ENCODE measurements at regions of chr19 and their contacts with region 1.

Region 1: DNA sequence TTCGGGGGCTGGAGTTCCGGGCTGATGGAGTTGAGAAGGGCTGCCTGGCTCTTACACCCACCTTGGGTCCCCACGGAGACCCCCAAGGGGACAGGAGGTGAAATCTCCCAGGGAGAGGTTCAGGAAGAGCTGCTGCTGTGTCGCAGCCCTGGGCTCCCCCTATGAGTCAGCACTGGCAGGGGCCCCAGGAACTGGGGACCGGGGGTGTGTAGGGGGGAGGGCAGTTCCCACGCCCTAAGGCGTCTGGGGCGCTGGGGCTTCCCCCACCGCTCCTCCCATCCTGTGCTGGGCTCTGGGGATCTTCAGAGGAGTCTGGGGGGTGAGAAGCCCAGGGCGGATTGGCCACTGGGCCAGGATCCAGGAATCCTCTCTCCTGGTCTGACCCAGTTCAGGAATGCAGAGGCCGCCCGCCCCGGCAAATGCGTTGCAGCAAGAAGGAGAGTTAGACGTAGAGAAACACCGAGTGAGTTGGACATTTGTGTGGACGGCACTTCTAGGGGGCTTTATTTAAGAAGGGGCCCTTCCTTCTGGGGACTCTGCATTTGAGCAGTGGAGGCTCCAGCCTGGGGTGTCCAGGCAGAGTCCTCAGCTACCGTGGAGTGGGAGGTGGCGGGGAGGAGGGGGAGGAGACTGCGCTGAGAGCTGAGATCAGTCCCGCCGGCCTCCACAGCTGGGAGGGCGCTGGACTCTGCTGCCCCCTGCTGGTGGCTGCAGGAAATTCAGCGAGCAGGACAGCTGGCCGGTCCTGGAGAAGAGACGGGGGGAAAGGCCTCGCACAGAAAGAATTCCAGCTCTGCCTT is 15.0 kb upstream of the NANOS3 start:
- DNase-seq: peak; percentile 79
- ATAC-seq: peak; percentile 91
- H3K4me3 ChIP-seq: peak overlapping the region; percentile 74
- H3K27ac ChIP-seq: peak overlapping the region; percentile 99
- H3K4me1 ChIP-seq: peaks cover 8% of the 10 kb centered on the region
- H3K27me3 ChIP-seq: peaks cover 0 to 1% of the 10 kb centered on the region in 2 experiments; a peak in 2 of 4 replicates
- CTCF ChIP-seq: peak; percentile 87 to 98 (median 93)
- EP300 ChIP-seq: peak; percentile 48 to 56; a peak in 2 of 4 replicates
- POLR2A ChIP-seq: peak; percentile 87
- RAD21 ChIP-seq: peak; percentile 96

Region 2: DNA sequence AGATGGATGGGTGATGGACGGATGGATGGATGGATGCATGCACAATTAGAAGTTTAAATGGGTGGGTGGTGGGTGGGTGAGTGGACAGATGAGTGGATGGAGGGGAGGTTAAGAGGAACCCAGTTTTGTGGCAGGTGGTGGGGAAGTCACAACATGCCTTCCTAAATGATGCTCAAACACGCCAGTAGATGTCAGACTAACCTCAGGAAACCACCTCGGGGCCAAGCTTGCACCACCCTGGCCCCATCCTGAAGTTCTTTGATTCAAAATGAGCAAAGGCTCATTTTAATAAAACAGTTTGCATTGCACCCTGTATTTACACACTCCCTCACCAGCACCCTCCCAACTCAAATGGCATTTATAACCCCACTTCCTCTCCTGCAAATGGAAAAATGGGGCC is 264.3 kb before region 1 on chr19:
- CTCF ChIA-PET with region 1: interaction called, 23 read pairs
- POLR2A ChIA-PET with region 1: no interaction called
- RAD21 ChIA-PET with region 1: interaction called, 16 read pairs
- SMC1A ChIA-PET with region 1: interaction called, 21 read pairs
- in situ Hi-C with region 1: loop called (anchors 5 kb)
- intact Hi-C with region 1: loop called (anchors 1 kb)
- DNase-seq: peak; percentile 25
- ATAC-seq: peak; percentile 93
- H3K4me3 ChIP-seq: no peak overlapping the region
- H3K27ac ChIP-seq: no peak overlapping the region
- H3K4me1 ChIP-seq: no peaks in the 10 kb centered on the region
- H3K27me3 ChIP-seq: no peaks in the 10 kb centered on the region
- CTCF ChIP-seq: peak; percentile 57 to 85 (median 58); a peak in 5 of 6 replicates
- EP300 ChIP-seq: no peak
- POLR2A ChIP-seq: no peak
- RAD21 ChIP-seq: peak; percentile 88

Region 3: GRCh38 chr19:13748169-13748828 is 113.6 kb before region 1 on chr19:
- CTCF ChIA-PET with region 1: interaction called, 13 read pairs
- POLR2A ChIA-PET with region 1: no interaction called
- RAD21 ChIA-PET with region 1: interaction called, 25 read pairs
- SMC1A ChIA-PET with region 1: interaction called, 13 read pairs
- in situ Hi-C with region 1: no loop called
- intact Hi-C with region 1: no loop called
- DNase-seq: no peak
- ATAC-seq: peak; percentile 7
- H3K4me3 ChIP-seq: peak overlapping the region; percentile 84
- H3K27ac ChIP-seq: peak overlapping the region; percentile 72
- H3K4me1 ChIP-seq: peaks cover 5% of the 10 kb centered on the region
- H3K27me3 ChIP-seq: no peaks in the 10 kb centered on the region
- CTCF ChIP-seq: no peak
- EP300 ChIP-seq: no peak
- POLR2A ChIP-seq: no peak
- RAD21 ChIP-seq: no peak

Region 4: GRCh38 chr19:13794757-13795589 is 67.0 kb before region 1 on chr19 and contains the start of gene ZSWIM4:
- CTCF ChIA-PET with region 1: interaction called, 63 read pairs
- POLR2A ChIA-PET with region 1: interaction called, 37 read pairs
- RAD21 ChIA-PET with region 1: interaction called, 59 read pairs
- SMC1A ChIA-PET with region 1: interaction called, 33 read pairs
- in situ Hi-C with region 1: no loop called
- intact Hi-C with region 1: no loop called
- DNase-seq: peak; percentile 95
- ATAC-seq: peak; percentile 97
- H3K4me3 ChIP-seq: peak within 1 kb of the TSS; percentile 75
- H3K27ac ChIP-seq: peak within 1 kb of the TSS; percentile 84
- H3K4me1 ChIP-seq: peaks cover 16% of the 10 kb centered on the region
- H3K27me3 ChIP-seq: no peaks in the 10 kb centered on the region
- CTCF ChIP-seq: no peak
- EP300 ChIP-seq: no peak
- POLR2A ChIP-seq: peak; percentile 48
- RAD21 ChIP-seq: no peak
- polyA plus RNA-seq, gene ZSWIM4: not detected

Region 5: GRCh38 chr19:13846557-13847406 is 15.2 kb before region 1 on chr19:
- CTCF ChIA-PET with region 1: interaction called, 51 read pairs
- POLR2A ChIA-PET with region 1: interaction called, 85 read pairs
- RAD21 ChIA-PET with region 1: interaction called, 70 read pairs
- SMC1A ChIA-PET with region 1: interaction called, 37 read pairs
- in situ Hi-C with region 1: no loop called
- intact Hi-C with region 1: loop called (anchors 1 kb)
- DNase-seq: peak; percentile 85
- ATAC-seq: peak; percentile 76
- H3K4me3 ChIP-seq: peak overlapping the region; percentile 64
- H3K27ac ChIP-seq: peak overlapping the region; percentile 91
- H3K4me1 ChIP-seq: peaks cover 41% of the 10 kb centered on the region
- H3K27me3 ChIP-seq: no peaks in the 10 kb centered on the region
- CTCF ChIP-seq: no peak
- EP300 ChIP-seq: peak; percentile 86 to 94
- POLR2A ChIP-seq: peak; percentile 72
- RAD21 ChIP-seq: no peak

Region 6: GRCh38 chr19:13937479-13938300 is 75.8 kb after region 1 on chr19:
- CTCF ChIA-PET with region 1: no interaction called
- POLR2A ChIA-PET with region 1: no interaction called
- RAD21 ChIA-PET with region 1: no interaction called
- SMC1A ChIA-PET with region 1: no interaction called
- in situ Hi-C with region 1: no loop called
- intact Hi-C with region 1: no loop called
- DNase-seq: no peak
- ATAC-seq: no peak
- H3K4me3 ChIP-seq: no peak overlapping the region
- H3K27ac ChIP-seq: no peak overlapping the region
- H3K4me1 ChIP-seq: no peaks in the 10 kb centered on the region
- H3K27me3 ChIP-seq: no peaks in the 10 kb centered on the region; a peak in 1 of 4 replicates
- CTCF ChIP-seq: no peak
- EP300 ChIP-seq: no peak
- POLR2A ChIP-seq: no peak
- RAD21 ChIP-seq: no peak

Measured in GM12878 (cell line).